Esophagus muscularis mucosa (tissue), 4 donors: ENCODE measurements at regions of chr6 and their contacts with region 1.

Region 1: DNA sequence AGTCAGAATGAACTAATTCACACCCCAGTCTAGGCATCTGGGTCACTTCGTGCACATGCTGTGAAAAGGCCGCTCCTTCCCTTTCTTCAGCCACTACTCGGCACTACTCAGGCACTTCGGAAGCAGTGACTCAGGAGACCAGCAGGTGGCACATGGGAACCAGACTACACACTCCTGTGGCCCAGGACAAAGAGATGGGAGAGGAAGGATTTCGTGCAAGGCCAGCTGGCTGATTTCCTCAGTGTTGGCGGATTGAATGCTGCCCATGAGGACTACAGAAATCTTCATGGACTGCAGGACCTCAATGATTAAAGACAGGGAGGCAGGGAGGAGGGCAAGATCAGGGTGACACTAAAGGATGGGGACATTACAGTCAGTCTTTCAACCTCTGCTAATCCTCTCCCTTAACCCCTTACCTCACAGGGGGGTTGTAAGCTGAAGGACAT is 117.8 kb upstream of the SPACA1 start:
- DNase-seq: no peak
- H3K4me3 ChIP-seq: no peak overlapping the region
- H3K27ac ChIP-seq: no peak overlapping the region
- H3K4me1 ChIP-seq: peaks cover 4 to 9% (median 5%) of the 10 kb centered on the region in 4 donors
- H3K27me3 ChIP-seq: no peaks in the 10 kb centered on the region
- CTCF ChIP-seq: peak; percentile 69 to 84 (median 71)
- EP300 ChIP-seq: no peak
- POLR2A ChIP-seq: no peak

Region 2: DNA sequence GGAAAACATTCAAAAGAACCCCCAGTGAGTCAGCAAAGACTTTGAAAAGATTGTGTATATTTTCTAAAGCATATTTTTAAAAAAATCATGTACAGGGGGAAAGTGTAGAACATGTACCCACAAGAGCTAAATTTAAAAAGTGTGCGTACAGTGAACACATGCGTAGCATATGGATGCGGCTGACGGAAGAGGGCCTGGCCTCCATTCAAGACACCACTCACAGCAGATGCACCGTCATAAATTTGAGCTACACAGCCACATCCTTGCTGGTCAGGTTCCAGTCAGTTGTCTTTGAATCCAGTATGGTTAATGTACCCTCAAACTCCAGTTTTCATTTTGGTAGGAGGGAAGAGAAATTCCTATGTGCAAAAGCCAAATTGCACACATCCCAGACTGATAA is 63.5 kb after region 1 on chr6:
- intact Hi-C with region 1: no loop called
- DNase-seq: no peak
- H3K4me3 ChIP-seq: no peak overlapping the region
- H3K27ac ChIP-seq: no peak overlapping the region
- H3K4me1 ChIP-seq: no peaks in the 10 kb centered on the region
- H3K27me3 ChIP-seq: no peaks in the 10 kb centered on the region
- CTCF ChIP-seq: no peak
- EP300 ChIP-seq: no peak
- POLR2A ChIP-seq: no peak

Region 3: GRCh38 chr6:88780714-88781389 is 851.0 kb after region 1 on chr6:
- intact Hi-C with region 1: loop called (anchors 5 kb)
- DNase-seq: no peak
- H3K4me3 ChIP-seq: no peak overlapping the region
- H3K27ac ChIP-seq: no peak overlapping the region
- H3K4me1 ChIP-seq: no peaks in the 10 kb centered on the region
- H3K27me3 ChIP-seq: no peaks in the 10 kb centered on the region
- CTCF ChIP-seq: peak; percentile 62 to 84 (median 80)
- EP300 ChIP-seq: no peak
- POLR2A ChIP-seq: no peak

Region 4: GRCh38 chr6:88870717-88871330 is 941.0 kb after region 1 on chr6:
- intact Hi-C with region 1: loop called (anchors 5 kb)
- DNase-seq: no peak
- H3K4me3 ChIP-seq: no peak overlapping the region
- H3K27ac ChIP-seq: no peak overlapping the region
- H3K4me1 ChIP-seq: peaks cover 0 to 5% (median 2%) of the 10 kb centered on the region in 4 donors
- H3K27me3 ChIP-seq: no peaks in the 10 kb centered on the region
- CTCF ChIP-seq: peak; percentile 56 to 66 (median 66)
- EP300 ChIP-seq: no peak
- POLR2A ChIP-seq: no peak